Calu3 (cell line): ENCODE measurements at regions of chr7 and their contacts with region 1.

Region 1: DNA sequence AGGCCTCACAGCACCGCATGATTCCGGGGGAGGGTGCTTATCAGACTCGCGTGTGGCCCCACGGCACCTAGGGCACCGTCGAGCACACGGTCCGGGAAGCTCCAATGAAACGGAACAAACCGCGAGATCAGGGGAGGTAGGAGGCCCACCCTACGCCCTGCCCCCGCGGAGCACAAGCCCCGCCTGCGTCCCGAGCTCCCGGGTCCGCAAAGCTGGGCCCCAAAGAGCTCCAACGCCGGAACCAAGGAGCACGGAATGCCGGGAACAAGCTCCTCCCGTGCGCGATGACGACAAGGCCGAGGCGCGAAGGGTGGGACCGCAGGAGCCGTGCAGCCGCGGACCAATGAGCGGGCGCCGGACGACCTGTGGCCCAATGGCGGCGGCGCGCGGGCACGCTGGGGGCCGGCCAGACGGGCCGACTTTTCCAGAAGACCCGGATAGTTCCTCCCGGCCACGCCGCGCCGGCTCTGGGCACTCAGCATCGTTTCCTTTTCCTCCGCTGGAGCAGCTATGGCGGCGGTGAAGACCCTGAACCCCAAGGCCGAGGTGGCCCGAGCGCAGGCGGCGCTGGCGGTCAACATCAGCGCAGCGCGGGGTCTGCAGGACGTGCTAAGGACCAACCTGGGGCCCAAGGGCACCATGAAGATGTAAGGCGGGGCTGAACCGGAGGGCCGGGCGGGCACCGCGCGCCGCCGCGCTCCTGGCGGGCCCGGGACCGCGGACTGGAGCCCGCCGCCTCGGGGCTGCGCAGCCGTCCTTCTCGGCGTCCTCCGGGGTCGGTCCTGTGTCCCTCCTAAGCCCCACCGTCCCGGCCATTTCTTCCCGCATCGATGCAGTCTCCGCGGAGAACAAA is at the starts of genes CCT6A and PSPH:
- DNase-seq: peak; percentile 99
- H3K4me3 Mint-ChIP-seq: peak within 1 kb of the TSS; percentile 94
- H3K27ac Mint-ChIP-seq: peak within 1 kb of the TSS; percentile 95
- H3K4me1 Mint-ChIP-seq: peaks cover 55% of the 10 kb centered on the region
- H3K27me3 Mint-ChIP-seq: no peaks in the 10 kb centered on the region
- CTCF ChIP-seq: no peak
- total RNA-seq, gene CCT6A: 416 and 421 TPM in 2 replicates
- total RNA-seq, gene PSPH: 37.5 and 39.9 TPM in 2 replicates

Region 2: GRCh38 chr7:56033671-56034432 is 17.7 kb before region 1 on chr7:
- CTCF ChIA-PET with region 1: interaction called, 8 read pairs
- intact Hi-C with region 1: loop called (anchors 2 kb)
- DNase-seq: peak; percentile 85
- H3K4me3 Mint-ChIP-seq: peak overlapping the region; percentile 81
- H3K27ac Mint-ChIP-seq: peak overlapping the region; percentile 66
- H3K4me1 Mint-ChIP-seq: peaks cover 13% of the 10 kb centered on the region
- H3K27me3 Mint-ChIP-seq: no peaks in the 10 kb centered on the region
- CTCF ChIP-seq: peak; percentile 52

Region 3: GRCh38 chr7:56063882-56064625 is 12.5 kb after region 1 on chr7 and contains the start of gene SUMF2:
- CTCF ChIA-PET with region 1: interaction called, 12 read pairs
- intact Hi-C with region 1: loop called (anchors 1 kb)
- DNase-seq: peak; percentile 96
- H3K4me3 Mint-ChIP-seq: peak within 1 kb of the TSS; percentile 84
- H3K27ac Mint-ChIP-seq: peak within 1 kb of the TSS; percentile 90
- H3K4me1 Mint-ChIP-seq: peaks cover 51% of the 10 kb centered on the region
- H3K27me3 Mint-ChIP-seq: no peaks in the 10 kb centered on the region
- CTCF ChIP-seq: no peak
- total RNA-seq, gene SUMF2: 226 and 255 TPM in 2 replicates

Region 4: GRCh38 chr7:56250149-56250548 is 198.6 kb after region 1 on chr7:
- CTCF ChIA-PET with region 1: no interaction called
- intact Hi-C with region 1: no loop called
- DNase-seq: no peak
- H3K4me3 Mint-ChIP-seq: no peak overlapping the region
- H3K27ac Mint-ChIP-seq: no peak overlapping the region
- H3K4me1 Mint-ChIP-seq: no peaks in the 10 kb centered on the region
- H3K27me3 Mint-ChIP-seq: no peaks in the 10 kb centered on the region
- CTCF ChIP-seq: no peak